ENCODE measurements at regions of chr18 and their contacts with region 1.

Region 1: GRCh38 chr18:58186258-58186948 is 142.4 kb downstream of the NEDD4L start:
- DNase-seq: peak; percentile 91
- ATAC-seq: peak; percentile 58
- H3K4me3 ChIP-seq: no peak overlapping the region
- H3K27ac ChIP-seq: no peak overlapping the region
- H3K4me1 ChIP-seq: peaks cover 16% of the 10 kb centered on the region
- H3K27me3 ChIP-seq: no peaks in the 10 kb centered on the region
- CTCF ChIP-seq: no peak
- POLR2A ChIP-seq: no peak
- RAD21 ChIP-seq: no peak

Region 2: DNA sequence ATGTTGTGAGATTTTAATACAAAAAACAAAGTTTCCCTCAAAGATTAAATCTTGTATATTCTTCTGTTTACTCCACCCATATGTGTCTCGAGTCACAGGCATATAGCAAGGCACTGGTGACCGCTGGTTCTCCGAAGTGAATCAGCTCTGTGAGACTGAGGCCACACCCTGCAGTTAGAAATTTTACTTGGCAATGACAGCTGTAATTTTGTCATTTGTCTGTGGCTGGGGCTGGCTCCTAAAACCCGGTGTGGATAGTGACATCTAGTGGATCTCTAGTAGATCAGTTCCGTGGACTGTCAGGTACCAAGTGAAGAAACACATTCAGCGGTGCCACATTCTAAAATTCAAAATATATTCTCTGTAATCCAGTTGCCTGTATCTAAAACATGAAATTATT is 135.6 kb after region 1 on chr18:
- CTCF ChIA-PET with region 1: interaction called, 3 read pairs
- POLR2A ChIA-PET with region 1: no interaction called
- dilution Hi-C with region 1: no loop called
- in situ Hi-C with region 1: no loop called
- intact Hi-C with region 1: loop called (anchors 5 kb)
- DNase-seq: peak; percentile 74
- ATAC-seq: peak; percentile 91
- H3K4me3 ChIP-seq: no peak overlapping the region
- H3K27ac ChIP-seq: no peak overlapping the region
- H3K4me1 ChIP-seq: peaks cover 6% of the 10 kb centered on the region; the same call in 1 of the 2 replicates
- H3K27me3 ChIP-seq: no peaks in the 10 kb centered on the region
- CTCF ChIP-seq: peak; percentile 62
- POLR2A ChIP-seq: no peak
- RAD21 ChIP-seq: peak; percentile 88

Region 3: DNA sequence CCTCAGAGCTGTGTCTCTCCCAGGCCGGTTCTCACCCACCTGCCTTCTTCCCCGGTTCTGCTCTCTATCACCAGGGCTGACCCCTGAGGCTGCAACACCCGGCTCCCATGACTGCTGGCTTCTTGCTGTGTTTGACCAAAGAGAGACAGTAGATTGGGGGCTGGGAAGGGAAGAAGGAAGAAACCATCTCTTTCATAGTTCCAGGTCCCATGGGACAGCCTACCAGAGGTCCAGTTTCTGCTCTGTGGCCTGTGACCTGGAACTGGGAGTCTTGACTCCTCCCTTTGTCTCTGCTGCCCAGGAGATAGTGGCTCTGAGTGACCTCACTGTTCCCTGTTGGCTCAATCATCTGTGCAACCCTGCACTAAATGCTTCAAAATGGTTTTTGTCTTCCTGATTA is 404.4 kb after region 1 on chr18:
- CTCF ChIA-PET with region 1: no interaction called
- POLR2A ChIA-PET with region 1: no interaction called
- dilution Hi-C with region 1: no loop called
- in situ Hi-C with region 1: no loop called
- intact Hi-C with region 1: no loop called
- DNase-seq: no peak
- ATAC-seq: peak; percentile 8
- H3K4me3 ChIP-seq: no peak overlapping the region
- H3K27ac ChIP-seq: peak overlapping the region; percentile 92; the same call in 1 of the 2 replicates
- H3K4me1 ChIP-seq: peaks cover 8% of the 10 kb centered on the region
- H3K27me3 ChIP-seq: no peaks in the 10 kb centered on the region
- CTCF ChIP-seq: no peak
- POLR2A ChIP-seq: no peak
- RAD21 ChIP-seq: no peak

Measured in IMR-90 (cell line).